ENCODE measurements at regions of chr11 and their contacts with region 1.

Region 1: DNA sequence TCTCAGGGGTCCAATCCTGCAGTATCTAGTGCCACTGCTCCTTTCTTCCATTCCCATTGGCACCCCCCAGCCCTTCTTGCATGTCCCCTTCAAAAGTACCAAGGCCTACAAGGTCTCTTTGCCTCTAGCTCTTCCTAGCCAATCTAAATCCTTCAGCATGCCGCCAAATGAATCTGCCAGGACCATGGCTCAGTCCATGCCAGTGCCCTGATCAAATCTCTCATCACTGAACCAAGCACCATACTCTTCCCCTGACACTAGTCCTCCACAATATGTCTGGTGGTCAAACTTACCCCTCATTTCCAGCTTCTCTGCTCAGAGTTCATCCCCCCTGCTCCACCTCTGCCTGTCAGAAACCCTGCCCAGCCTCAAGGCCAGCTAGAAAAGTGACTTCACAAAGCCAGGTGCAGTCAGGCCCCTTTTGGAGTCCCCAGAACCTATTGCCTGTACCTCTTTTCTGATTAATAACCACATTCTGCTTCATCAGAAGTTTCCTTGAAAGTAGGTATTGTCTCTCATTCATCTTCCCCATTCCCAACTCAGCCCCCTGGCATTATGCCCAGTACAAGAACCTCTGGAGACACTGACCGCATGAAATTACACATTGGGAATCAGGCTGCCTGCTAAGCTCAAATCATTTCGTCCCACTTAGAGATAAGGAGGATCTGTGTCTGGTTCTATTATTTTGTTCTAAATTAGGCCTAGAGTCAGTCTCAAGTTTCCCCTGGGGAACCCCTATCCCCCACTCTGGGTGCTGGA is 11.4 kb downstream of the FEN1 start:
- DNase-seq: peak in 1 of 3 donors; percentile 1
- ATAC-seq: no peak
- H3K4me3 ChIP-seq: no peak overlapping the region
- H3K27ac ChIP-seq: no peak overlapping the region
- H3K4me1 ChIP-seq: no peaks in the 10 kb centered on the region
- H3K27me3 ChIP-seq: no peaks in the 10 kb centered on the region
- CTCF ChIP-seq: no peak
- POLR2A ChIP-seq: no peak

Region 2: DNA sequence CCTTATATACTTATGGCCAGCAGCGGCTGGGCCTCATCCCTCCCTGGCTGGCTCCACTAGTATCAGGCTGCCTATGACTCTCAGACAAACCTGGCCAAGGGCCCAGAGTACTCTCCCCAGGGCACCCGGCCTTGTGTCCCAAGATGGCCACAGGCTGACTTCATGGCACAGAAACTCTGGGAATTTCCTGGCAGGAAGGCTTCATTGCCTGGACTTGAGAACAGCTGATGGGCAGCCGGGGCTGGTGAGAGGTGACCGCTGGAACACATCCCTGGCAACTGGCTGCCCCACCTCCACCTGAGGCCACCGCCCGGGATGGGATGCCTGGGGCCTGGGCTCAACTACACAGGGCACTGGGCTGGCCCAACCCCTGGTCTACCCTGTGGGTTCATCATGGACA is 84.0 kb after region 1 on chr11:
- intact Hi-C with region 1: loop called (anchors 10 kb)
- DNase-seq: peak in 1 of 3 donors; percentile 64
- ATAC-seq: peak in 2 of 4 donors; percentile 7 to 47
- H3K4me3 ChIP-seq: no peak overlapping the region
- H3K27ac ChIP-seq: no peak overlapping the region
- H3K4me1 ChIP-seq: peaks cover 0 to 8% (median 2%) of the 10 kb centered on the region in 4 donors
- H3K27me3 ChIP-seq: no peaks in the 10 kb centered on the region
- CTCF ChIP-seq: no peak
- POLR2A ChIP-seq: no peak

Measured in right lobe of liver (tissue), 6 donors.